ENCODE measurements at regions of chr4 and their contacts with region 1.

Region 1: DNA sequence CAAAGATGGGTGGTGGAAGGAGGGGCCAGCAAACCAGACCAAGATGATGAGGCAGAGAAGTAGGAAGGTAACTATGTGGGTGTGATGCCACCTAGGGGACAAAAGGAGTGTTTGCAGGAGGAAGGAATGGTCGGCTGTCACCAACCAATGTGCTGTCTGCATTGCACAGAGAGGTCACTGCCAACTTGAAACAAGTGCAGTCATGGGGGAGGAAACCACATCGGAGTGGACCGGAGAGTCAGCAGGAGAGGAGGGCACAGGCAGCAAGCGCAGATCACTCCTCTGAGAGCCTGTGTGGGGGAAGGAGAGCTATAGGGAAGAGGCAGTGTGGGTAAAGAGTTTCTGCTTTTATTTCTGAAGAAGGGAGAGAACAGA is 38.5 kb upstream of the FGFBP2 start:
- DNase-seq: peak; percentile 67
- ATAC-seq: peak; percentile 94
- H3K4me3 Mint-ChIP-seq: no peak overlapping the region
- H3K27ac Mint-ChIP-seq: no peak overlapping the region
- H3K4me1 Mint-ChIP-seq: no peaks in the 10 kb centered on the region
- H3K27me3 Mint-ChIP-seq: no peaks in the 10 kb centered on the region

Region 2: DNA sequence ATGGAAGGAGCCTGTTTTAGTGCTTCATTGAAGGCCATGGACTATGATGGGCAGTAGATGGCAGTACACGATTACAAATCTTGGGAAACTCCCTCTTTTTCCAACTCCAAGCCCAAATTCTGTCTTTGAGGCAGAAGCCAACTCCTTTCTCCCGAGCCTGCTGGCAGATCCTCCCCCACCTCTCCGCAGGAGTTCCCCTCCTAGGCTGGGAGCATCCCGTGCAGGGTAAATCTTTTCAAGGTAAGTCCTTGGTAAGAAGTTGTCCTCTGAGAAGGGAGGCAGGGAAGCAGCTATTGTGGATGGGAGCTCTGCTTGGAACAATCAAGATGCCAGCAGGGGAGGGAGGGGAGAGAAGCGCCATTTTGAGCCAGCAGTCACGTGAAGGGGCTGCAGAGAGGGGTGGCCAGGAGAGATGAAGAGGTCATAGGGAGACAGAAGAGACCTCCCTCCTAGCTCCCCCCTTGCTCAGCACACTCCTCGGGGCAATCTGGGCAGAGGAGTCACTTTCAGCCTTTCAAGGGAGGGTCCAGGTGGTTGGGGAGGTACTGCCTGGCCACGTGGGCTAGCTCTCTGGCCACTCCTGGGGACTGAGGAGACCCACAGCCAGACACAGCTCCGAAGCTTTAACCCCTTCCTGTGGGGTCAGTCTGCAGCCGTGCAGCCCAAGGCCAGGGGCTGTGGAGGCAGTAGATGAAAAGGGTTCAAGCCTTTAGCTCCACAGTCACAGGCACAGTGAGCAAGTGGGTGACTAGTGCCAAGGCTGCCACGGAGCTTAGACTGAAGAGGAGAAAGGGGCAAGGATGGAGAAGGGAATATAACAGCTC is 522.2 kb before region 1 on chr4:
- CTCF ChIA-PET with region 1: no interaction called
- POLR2A ChIA-PET with region 1: no interaction called
- intact Hi-C with region 1: loop called in 1 of 2 experiments (anchors 1 kb)
- DNase-seq: peak; percentile 15
- ATAC-seq: peak; percentile 39
- H3K4me3 Mint-ChIP-seq: no peak overlapping the region
- H3K27ac Mint-ChIP-seq: no peak overlapping the region
- H3K4me1 Mint-ChIP-seq: no peaks in the 10 kb centered on the region
- H3K27me3 Mint-ChIP-seq: no peaks in the 10 kb centered on the region

Region 3: DNA sequence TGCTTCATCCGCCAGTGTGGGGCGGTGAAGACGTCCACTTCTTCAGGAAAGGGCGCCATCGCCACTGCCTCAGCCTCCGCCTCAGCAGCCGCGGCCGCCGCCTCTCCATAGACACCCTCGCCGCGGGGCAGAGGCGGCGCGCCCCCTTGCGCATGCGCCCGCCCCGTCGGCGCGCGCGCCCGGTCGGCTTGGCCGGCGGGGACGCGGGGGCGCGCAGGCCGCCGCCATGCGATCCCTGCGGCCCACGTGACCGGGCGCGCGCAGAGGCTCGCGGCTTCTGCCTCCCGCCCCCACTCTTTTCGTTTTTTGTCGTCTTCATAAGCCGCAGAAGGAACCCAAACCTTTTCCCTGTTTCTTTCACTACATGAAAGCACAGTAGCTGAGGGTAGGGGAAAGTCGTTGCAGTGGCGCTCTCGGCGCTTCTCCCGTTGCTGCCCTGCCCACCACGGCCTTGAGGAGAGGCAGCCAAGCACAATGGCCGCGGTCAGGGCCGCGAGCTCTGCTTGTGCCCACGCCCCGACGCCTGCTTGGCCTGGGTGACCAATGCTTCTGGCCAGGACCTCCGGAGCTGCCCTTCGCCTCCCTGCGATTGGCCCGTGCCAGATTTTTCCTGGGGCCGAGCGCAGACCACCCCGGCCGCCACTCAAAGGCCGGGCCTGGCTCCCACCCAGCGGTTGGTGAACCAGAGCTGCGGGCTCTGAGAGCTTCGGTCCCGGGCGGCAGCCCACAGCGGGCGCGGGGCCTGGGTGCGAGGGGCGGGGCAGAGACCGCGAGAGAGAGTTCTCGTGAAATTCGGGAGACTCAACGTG is 346.0 kb before region 1 on chr4 and contains the start of gene FBXL5:
- CTCF ChIA-PET with region 1: no interaction called
- POLR2A ChIA-PET with region 1: no interaction called
- intact Hi-C with region 1: no loop called
- DNase-seq: peak; percentile 90
- ATAC-seq: peak; percentile 76
- H3K4me3 Mint-ChIP-seq: peak within 1 kb of the TSS; percentile 99
- H3K27ac Mint-ChIP-seq: peak within 1 kb of the TSS; percentile 97
- H3K4me1 Mint-ChIP-seq: peaks cover 57% of the 10 kb centered on the region
- H3K27me3 Mint-ChIP-seq: no peaks in the 10 kb centered on the region
- total RNA-seq, gene FBXL5: 20.1 to 29.1 TPM

Region 4: DNA sequence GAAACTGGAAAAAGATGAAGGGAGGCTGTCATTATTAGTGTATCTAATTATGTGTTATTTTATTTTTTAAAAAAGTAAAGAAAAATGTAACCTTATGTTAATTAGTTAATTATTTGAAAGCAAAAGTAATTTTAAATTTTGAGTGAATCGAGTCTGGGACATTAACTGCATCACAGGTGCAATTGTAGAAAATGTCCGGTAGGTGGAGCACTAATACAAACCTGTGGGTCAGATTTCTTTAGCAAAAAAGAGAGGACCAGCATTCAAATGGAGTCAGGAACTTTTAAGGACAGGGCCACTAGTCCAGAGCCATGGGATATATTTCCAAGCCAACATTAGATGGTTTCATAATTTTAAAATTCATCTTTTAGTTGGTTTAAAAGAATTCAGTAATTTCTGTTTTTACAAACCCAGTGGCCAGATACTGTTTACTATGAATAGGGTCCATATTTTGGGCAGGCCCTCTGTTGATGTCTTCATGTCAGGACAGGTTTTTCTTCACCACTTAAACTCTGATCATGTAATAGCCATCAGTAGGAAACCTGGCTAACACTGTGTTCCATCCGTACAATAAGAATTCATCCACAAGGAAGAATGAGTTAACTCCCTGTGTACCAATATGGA is 271.4 kb before region 1 on chr4:
- CTCF ChIA-PET with region 1: interaction called, 4 read pairs
- POLR2A ChIA-PET with region 1: no interaction called
- intact Hi-C with region 1: loop called (anchors 1 kb)
- DNase-seq: peak; percentile 19
- ATAC-seq: peak; percentile 65
- H3K4me3 Mint-ChIP-seq: no peak overlapping the region
- H3K27ac Mint-ChIP-seq: no peak overlapping the region
- H3K4me1 Mint-ChIP-seq: peaks cover 7% of the 10 kb centered on the region
- H3K27me3 Mint-ChIP-seq: no peaks in the 10 kb centered on the region

Region 5: DNA sequence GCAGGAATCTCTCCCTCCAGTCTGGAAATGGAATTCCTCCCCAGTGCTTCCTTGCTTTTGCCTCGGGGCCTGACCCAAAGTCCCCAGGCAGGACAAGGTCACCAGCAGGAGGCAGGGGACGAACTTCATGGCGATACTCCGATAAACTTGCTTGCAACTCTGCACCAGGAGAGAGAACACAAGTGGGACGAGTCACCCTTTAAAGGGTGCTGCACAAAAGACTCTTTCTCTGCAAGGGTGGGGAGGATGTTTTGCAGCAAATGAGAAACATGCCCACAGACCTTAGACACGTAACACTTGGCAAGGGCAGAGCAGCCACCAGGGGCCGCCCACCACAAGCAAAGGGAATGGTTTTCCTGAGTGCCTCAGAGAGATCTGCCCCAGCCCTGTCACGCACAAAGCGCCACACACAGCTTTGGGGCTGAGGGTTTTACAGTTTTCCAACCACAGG is 38.4 kb before region 1 on chr4 and contains the start of gene FGFBP2:
- CTCF ChIA-PET with region 1: interaction called, 26 read pairs
- POLR2A ChIA-PET with region 1: no interaction called
- intact Hi-C with region 1: loop called (anchors 1 kb)
- DNase-seq: peak; percentile 85
- ATAC-seq: peak; percentile 85
- H3K4me3 Mint-ChIP-seq: peak within 1 kb of the TSS; percentile 13
- H3K27ac Mint-ChIP-seq: peak within 1 kb of the TSS; percentile 59
- H3K4me1 Mint-ChIP-seq: peaks cover 23% of the 10 kb centered on the region
- H3K27me3 Mint-ChIP-seq: peaks cover 2% of the 10 kb centered on the region
- total RNA-seq, gene FGFBP2: 2.5 to 3.2 TPM

Region 6: GRCh38 chr4:16062601-16063000 is 61.1 kb after region 1 on chr4:
- CTCF ChIA-PET with region 1: no interaction called
- POLR2A ChIA-PET with region 1: no interaction called
- intact Hi-C with region 1: no loop called
- DNase-seq: no peak
- ATAC-seq: no peak
- H3K4me3 Mint-ChIP-seq: no peak overlapping the region
- H3K27ac Mint-ChIP-seq: no peak overlapping the region
- H3K4me1 Mint-ChIP-seq: peaks cover 2% of the 10 kb centered on the region
- H3K27me3 Mint-ChIP-seq: peaks cover 8% of the 10 kb centered on the region

Region 7: DNA sequence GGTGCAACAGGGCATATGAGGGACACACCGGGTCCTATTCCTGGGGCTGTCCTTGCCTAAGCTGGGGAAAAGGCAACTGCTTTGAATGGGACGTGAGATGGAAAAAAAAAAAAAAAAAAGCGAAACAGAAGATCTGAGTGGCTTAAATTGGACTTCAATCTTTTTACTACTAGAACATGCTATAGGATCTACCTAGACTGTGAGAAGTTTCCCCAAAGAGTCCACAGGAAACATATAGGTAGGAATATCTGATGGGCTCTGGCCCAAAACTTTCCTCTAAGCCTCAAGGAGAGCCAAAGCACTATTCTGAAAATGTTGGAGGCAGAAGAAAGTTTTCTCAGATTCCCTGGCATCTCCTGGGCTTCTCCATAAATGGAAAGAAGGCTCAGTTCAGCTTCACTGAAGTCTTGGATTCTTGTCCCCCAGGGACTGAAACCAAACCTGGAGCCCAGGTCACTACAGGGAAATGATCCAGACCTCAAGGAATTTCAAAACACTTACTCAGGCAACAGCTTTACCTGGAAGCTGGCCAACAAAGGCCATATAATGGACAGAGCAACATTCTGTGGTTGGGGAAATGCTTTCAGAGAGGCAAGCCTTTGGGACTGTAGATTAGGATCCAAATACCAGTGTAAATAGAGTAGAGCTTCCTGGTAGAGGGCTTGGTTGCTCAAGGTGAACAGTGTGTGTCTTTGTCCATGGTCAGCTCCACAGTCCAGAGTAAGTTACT is 139.2 kb after region 1 on chr4:
- CTCF ChIA-PET with region 1: no interaction called
- POLR2A ChIA-PET with region 1: no interaction called
- intact Hi-C with region 1: no loop called
- DNase-seq: no peak
- ATAC-seq: no peak
- H3K4me3 Mint-ChIP-seq: no peak overlapping the region
- H3K27ac Mint-ChIP-seq: no peak overlapping the region
- H3K4me1 Mint-ChIP-seq: no peaks in the 10 kb centered on the region
- H3K27me3 Mint-ChIP-seq: peaks cover 3% of the 10 kb centered on the region